Heart left ventricle (tissue), 16 donors: ENCODE measurements at regions of chr21 and their contacts with region 1.

Region 1: GRCh38 chr21:28342212-28342810 is 650.4 kb downstream of the LTN1 start:
- DNase-seq: no peak
- ATAC-seq: no peak
- H3K4me3 ChIP-seq: no peak overlapping the region
- H3K27ac ChIP-seq: no peak overlapping the region
- H3K4me1 ChIP-seq: peaks cover 0 to 20% (median 4%) of the 10 kb centered on the region in 12 donors
- H3K27me3 ChIP-seq: no peaks in the 10 kb centered on the region
- CTCF ChIP-seq: no peak
- POLR2A ChIP-seq: no peak

Region 2: GRCh38 chr21:27759091-27759659 is 583.1 kb before region 1 on chr21:
- intact Hi-C with region 1: loop called in 7 of 10 experiments (anchors 5 to 10 kb)
- DNase-seq: peak in 4 of 5 donors; percentile 23 to 60 (median 43)
- ATAC-seq: peak; percentile 61 to 86 (median 72)
- H3K4me3 ChIP-seq: no peak overlapping the region
- H3K27ac ChIP-seq: no peak overlapping the region
- H3K4me1 ChIP-seq: peaks cover 0 to 16% (median 0%) of the 10 kb centered on the region in 12 donors
- H3K27me3 ChIP-seq: no peaks in the 10 kb centered on the region
- CTCF ChIP-seq: peak; percentile 16 to 64 (median 46)
- POLR2A ChIP-seq: no peak

Region 3: GRCh38 chr21:28111151-28111619 is 231.1 kb before region 1 on chr21:
- intact Hi-C with region 1: no loop called
- DNase-seq: peak in 4 of 5 donors; percentile 70 to 80 (median 76)
- ATAC-seq: peak; percentile 96 to 100 (median 99)
- H3K4me3 ChIP-seq: peak overlapping the region in 7 of 12 donors; percentile 1 to 32 (median 16)
- H3K27ac ChIP-seq: peak overlapping the region in 10 of 12 donors; percentile 14 to 71 (median 53)
- H3K4me1 ChIP-seq: peaks cover 0 to 14% (median 7%) of the 10 kb centered on the region in 12 donors
- H3K27me3 ChIP-seq: no peaks in the 10 kb centered on the region
- CTCF ChIP-seq: no peak
- POLR2A ChIP-seq: no peak

Region 4: GRCh38 chr21:28308516-28308915 is 33.8 kb before region 1 on chr21:
- intact Hi-C with region 1: no loop called
- DNase-seq: no peak
- ATAC-seq: no peak
- H3K4me3 ChIP-seq: no peak overlapping the region
- H3K27ac ChIP-seq: no peak overlapping the region
- H3K4me1 ChIP-seq: peaks cover 0 to 3% (median 0%) of the 10 kb centered on the region in 12 donors
- H3K27me3 ChIP-seq: no peaks in the 10 kb centered on the region
- CTCF ChIP-seq: no peak
- POLR2A ChIP-seq: no peak

Region 5: DNA sequence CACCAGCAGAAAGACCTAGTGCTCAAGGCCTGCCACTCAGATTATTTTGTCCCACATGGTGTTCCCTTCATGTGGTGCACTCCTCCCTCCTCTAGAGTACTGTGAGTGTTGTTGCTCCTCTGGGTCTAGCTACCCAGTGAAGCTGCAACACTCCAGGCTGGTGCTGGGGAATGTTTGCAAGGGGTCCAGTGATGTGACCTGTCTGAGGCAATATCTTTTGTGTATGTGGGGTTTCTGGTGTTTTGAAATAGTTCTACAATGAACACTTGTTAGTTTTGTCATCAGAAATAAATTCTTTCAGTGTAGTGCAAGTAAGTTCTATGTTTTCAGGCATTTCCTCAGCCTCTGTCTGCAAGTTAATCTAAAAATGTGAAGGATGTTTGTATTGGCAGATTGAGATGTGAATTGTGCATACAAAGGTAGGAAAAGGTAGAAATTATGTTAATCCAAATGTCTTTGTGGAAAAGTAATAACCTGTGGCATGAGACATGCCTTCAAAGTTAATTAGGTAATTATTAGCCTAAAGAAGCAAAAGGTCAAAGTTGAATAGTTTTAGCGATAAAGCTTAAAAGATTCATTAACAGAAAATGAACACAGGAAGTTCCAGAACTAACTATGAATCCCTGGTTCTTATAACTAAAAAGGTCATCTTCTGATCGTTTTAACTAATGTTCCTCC is 33.5 kb after region 1 on chr21:
- intact Hi-C with region 1: no loop called
- DNase-seq: no peak
- ATAC-seq: no peak
- H3K4me3 ChIP-seq: no peak overlapping the region
- H3K27ac ChIP-seq: no peak overlapping the region
- H3K4me1 ChIP-seq: no peaks in the 10 kb centered on the region
- H3K27me3 ChIP-seq: no peaks in the 10 kb centered on the region
- CTCF ChIP-seq: no peak
- POLR2A ChIP-seq: no peak

Region 6: GRCh38 chr21:28442624-28443023 is 100.3 kb after region 1 on chr21:
- intact Hi-C with region 1: no loop called
- DNase-seq: no peak
- ATAC-seq: no peak
- H3K4me3 ChIP-seq: no peak overlapping the region
- H3K27ac ChIP-seq: no peak overlapping the region
- H3K4me1 ChIP-seq: no peaks in the 10 kb centered on the region
- H3K27me3 ChIP-seq: no peaks in the 10 kb centered on the region
- CTCF ChIP-seq: no peak
- POLR2A ChIP-seq: no peak

Region 7: DNA sequence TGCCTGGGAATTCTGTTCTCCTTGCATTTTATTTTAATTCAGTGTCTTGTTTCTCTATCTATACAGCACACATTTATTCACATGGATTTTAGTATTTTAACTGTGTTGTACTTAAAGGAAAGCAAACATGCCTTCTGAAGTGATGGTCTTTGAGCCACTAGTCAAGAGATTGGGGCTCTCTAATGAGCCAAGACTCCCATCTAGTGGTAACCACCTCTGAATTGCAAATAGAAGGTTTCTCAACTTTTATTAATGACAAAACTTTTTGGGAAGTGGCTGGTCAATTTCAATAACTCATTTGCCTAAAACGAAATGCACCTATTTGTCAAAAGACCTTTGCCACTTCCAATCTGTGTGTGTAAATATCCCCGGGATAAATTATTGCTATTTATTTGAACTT is 450.7 kb after region 1 on chr21:
- intact Hi-C with region 1: loop called in 3 of 10 experiments (anchors 2 to 10 kb)
- DNase-seq: no peak
- ATAC-seq: peak in 2 of 4 donors; percentile 59 to 72
- H3K4me3 ChIP-seq: no peak overlapping the region
- H3K27ac ChIP-seq: no peak overlapping the region
- H3K4me1 ChIP-seq: peaks cover 0 to 12% (median 5%) of the 10 kb centered on the region in 12 donors
- H3K27me3 ChIP-seq: no peaks in the 10 kb centered on the region
- CTCF ChIP-seq: peak in 10 of 12 donors; percentile 38 to 65 (median 54)
- POLR2A ChIP-seq: no peak

Region 8: GRCh38 chr21:28943631-28944030 is 601.3 kb after region 1 on chr21:
- intact Hi-C with region 1: loop called in 1 of 10 experiments (anchors 10 kb)
- DNase-seq: no peak
- ATAC-seq: no peak
- H3K4me3 ChIP-seq: no peak overlapping the region
- H3K27ac ChIP-seq: no peak overlapping the region
- H3K4me1 ChIP-seq: peaks cover 0 to 8% (median 0%) of the 10 kb centered on the region in 12 donors
- H3K27me3 ChIP-seq: no peaks in the 10 kb centered on the region
- CTCF ChIP-seq: no peak
- POLR2A ChIP-seq: no peak